Psoas muscle (tissue), 8 donors: ENCODE measurements at regions of chr12 and their contacts with region 1.

Region 1: DNA sequence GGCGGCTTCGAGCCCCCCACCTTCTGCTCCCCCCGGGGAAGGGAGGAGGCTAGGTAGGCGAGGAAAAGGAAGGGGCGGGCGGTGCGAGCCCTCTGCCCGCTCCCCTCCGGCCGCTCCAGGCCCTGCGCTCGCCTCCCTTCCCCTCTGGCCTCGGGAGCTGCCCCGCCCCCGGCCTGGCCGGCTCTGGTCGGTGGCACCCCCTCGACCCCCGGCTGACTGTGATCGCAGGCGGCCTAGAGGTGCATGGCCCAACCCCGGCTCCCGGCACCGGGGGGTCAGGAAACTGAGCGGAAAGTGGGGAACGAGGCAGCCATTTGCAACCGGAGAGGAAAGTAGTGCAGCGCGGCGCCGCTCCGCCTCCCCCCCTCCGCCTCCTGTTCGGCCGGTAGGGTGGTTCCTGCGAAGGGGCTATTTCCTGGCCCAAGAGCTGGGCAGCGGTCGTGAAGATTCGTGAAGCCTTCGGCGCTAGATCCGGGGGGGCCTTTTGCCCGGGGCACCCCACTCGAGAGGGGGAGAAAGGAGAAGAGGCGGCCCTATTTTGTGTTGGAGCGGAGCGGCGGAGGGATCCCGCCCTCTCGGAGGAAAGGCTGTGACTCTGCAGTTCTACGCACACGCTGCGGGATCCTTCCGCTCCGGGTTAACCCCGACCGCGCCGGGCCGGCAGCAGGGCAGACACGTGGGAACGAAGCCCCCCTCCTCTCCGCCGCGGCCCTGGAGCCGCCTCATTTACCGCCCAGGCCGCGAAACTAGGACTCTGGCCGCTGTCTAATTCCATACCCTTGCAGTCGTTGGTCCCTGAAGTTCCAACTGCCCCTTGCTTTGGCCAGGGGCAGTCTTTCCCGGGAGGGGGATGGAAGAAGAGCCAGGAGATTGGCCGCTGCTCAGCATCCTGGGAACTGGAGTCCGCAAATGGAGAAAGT is at the start of gene KMT2D:
- DNase-seq: peak; percentile 94 to 97
- ATAC-seq: peak; percentile 88 to 91 (median 90)
- H3K4me3 ChIP-seq: peak within 1 kb of the TSS; percentile 99
- H3K27ac ChIP-seq: peak within 1 kb of the TSS; percentile 95
- H3K4me1 ChIP-seq: peaks cover 30% of the 10 kb centered on the region
- H3K27me3 ChIP-seq: no peaks in the 10 kb centered on the region
- CTCF ChIP-seq: peak; percentile 25
- total RNA-seq, gene KMT2D: 62.6 to 69.8 (median 65.1) TPM

Region 2: GRCh38 chr12:48580831-48581230 is 479.7 kb before region 1 on chr12:
- intact Hi-C with region 1: no loop called
- DNase-seq: no peak
- ATAC-seq: no peak
- H3K4me3 ChIP-seq: no peak overlapping the region
- H3K27ac ChIP-seq: no peak overlapping the region
- H3K4me1 ChIP-seq: no peaks in the 10 kb centered on the region
- H3K27me3 ChIP-seq: no peaks in the 10 kb centered on the region
- CTCF ChIP-seq: no peak

Region 3: GRCh38 chr12:49019443-49020324 is 40.8 kb before region 1 on chr12:
- intact Hi-C with region 1: loop called (anchors 5 kb)
- DNase-seq: peak in 1 of 2 donors; percentile 49
- ATAC-seq: no peak
- H3K4me3 ChIP-seq: peak overlapping the region; percentile 88
- H3K27ac ChIP-seq: peak overlapping the region; percentile 96
- H3K4me1 ChIP-seq: peaks cover 30% of the 10 kb centered on the region
- H3K27me3 ChIP-seq: no peaks in the 10 kb centered on the region
- CTCF ChIP-seq: no peak

Region 4: DNA sequence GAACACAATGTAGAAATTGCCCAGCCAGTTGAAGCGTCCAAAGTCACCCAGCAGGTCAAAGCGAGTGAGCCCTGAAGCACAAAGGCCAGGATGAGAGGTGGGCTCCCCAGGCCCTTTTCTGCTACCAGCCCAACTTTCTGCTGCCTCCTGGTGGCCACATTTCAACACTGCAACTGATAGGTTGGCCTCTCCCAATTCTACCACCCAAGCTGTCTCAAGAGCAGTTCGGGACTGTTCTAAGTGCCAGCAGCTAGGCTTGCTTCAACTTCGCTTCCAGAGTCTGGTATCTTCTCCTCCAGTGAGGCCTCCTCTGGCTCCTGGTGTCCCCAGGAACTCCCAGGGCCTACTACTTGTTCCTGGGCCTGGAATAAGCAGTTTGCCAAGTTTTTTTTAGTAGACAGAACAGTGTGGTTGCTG is 37.5 kb after region 1 on chr12:
- intact Hi-C with region 1: loop called in 1 of 2 experiments (anchors 5 kb)
- DNase-seq: peak in 1 of 2 donors; percentile 62
- ATAC-seq: peak; percentile 50 to 66 (median 57)
- H3K4me3 ChIP-seq: no peak overlapping the region
- H3K27ac ChIP-seq: no peak overlapping the region
- H3K4me1 ChIP-seq: peaks cover 13% of the 10 kb centered on the region
- H3K27me3 ChIP-seq: peaks cover 0 to 20% (median 4%) of the 10 kb centered on the region in 3 donors
- CTCF ChIP-seq: peak; percentile 71

Region 5: DNA sequence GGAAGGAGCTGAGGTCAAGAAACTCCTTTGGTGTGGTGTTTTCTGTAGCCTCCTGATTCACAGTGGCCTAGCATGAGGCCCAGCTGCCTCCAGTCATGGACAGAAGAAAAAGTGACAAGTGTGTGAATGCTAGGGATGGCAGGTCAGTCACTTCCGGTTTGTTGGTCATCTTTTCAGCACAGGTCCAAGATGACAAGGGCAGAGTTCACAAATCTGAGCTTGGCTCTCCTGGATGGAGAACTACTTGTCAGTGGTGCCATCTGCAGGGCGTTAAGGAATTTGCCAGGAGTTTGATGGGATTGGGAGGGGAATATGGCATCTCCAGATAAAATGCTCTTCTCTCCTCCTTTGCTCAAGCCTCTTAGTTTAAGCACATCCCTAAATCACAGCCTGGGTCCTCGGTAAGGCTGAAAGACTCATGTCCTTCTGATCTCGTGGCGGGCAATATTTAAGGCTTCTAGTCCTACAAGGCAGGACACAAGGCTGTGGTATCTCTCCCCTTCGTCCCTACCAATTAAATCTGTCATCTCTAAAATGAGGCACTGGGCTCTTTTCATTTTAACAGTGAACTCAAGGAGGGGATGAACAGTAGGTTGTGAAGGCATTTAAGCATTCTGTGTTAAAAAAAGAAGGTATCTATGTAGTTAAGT is 60.7 kb after region 1 on chr12:
- intact Hi-C with region 1: loop called in 1 of 2 experiments (anchors 5 kb)
- DNase-seq: no peak
- ATAC-seq: peak; percentile 79 to 96 (median 91)
- H3K4me3 ChIP-seq: no peak overlapping the region
- H3K27ac ChIP-seq: no peak overlapping the region
- H3K4me1 ChIP-seq: no peaks in the 10 kb centered on the region
- H3K27me3 ChIP-seq: no peaks in the 10 kb centered on the region
- CTCF ChIP-seq: peak; percentile 60